Activated naive CD4-positive, alpha-beta T cell treated with anti-CD3 and anti-CD28 coated beads for 36 hours (primary cell): ENCODE measurements at regions of chr12 and their contacts with region 1.

Region 1: DNA sequence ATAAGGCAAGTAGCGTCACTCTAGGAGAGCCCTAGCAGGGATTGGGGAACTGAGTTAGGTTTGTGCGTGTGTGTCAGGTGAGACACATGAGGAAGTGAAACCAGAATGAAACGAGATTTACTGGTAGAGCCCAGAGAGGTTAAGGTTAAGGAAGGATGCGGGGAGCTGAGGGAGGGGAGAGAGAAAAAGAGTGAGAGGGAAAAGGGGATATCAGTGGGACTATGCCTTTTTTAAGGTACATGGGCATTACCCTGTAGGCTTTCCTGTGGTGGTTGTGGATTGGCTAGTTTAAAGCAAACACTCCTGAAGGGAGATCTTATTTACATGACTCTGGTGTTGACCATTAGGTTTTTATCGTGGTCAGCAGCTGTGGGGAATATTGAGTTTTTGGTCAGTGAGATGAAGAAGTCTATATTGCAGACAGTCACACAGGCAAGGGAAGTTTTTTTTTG is 13.9 kb downstream of the ZDHHC17 start:
- DNase-seq: peak; percentile 23
- H3K4me3 Mint-ChIP-seq: no peak overlapping the region
- H3K27ac Mint-ChIP-seq: peak overlapping the region; percentile 60
- H3K4me1 Mint-ChIP-seq: peaks cover 68% of the 10 kb centered on the region
- H3K27me3 Mint-ChIP-seq: no peaks in the 10 kb centered on the region

Region 2: GRCh38 chr12:76763743-76764675 is 13.8 kb before region 1 on chr12 and contains the start of gene ZDHHC17:
- CTCF ChIA-PET with region 1: interaction called, 12 read pairs
- intact Hi-C with region 1: loop called (anchors 1 kb)
- DNase-seq: peak; percentile 88
- H3K4me3 Mint-ChIP-seq: peak within 1 kb of the TSS; percentile 98
- H3K27ac Mint-ChIP-seq: peak within 1 kb of the TSS; percentile 91
- H3K4me1 Mint-ChIP-seq: peaks cover 38% of the 10 kb centered on the region
- H3K27me3 Mint-ChIP-seq: no peaks in the 10 kb centered on the region
- total RNA-seq, gene ZDHHC17: 19.1 to 22.2 TPM